Cardiac septum (tissue), 1 donor: ENCODE measurements at regions of chr3 and their contacts with region 1.

Region 1: DNA sequence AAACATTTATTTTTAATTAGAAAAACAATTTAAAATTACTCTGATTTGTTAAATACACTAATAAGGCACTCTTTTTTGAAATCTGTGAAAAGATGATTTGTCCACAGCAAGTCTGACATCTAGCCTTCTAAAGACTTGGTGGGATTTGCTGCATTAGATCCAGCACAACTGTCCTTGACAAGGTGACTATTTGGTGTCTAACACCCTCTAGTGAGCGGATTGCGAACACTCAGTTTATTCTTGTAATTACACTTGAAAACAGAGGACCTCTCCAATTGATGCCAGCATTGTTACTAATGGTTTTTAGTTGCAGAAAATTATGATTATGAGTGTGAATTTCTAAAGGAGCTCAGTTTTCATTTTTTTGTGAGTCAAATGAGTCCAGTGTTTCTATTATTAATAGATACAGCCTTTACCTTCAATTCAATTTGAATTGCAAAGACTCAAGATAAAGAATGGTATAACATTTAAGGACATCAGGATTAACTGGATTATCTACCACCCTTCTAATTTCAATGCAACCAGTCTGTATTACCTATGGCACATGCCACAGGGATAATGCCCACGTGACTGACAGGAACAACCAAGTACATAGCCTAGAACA is 29.7 kb upstream of the STRIT1 start:
- DNase-seq: no peak

Region 2: DNA sequence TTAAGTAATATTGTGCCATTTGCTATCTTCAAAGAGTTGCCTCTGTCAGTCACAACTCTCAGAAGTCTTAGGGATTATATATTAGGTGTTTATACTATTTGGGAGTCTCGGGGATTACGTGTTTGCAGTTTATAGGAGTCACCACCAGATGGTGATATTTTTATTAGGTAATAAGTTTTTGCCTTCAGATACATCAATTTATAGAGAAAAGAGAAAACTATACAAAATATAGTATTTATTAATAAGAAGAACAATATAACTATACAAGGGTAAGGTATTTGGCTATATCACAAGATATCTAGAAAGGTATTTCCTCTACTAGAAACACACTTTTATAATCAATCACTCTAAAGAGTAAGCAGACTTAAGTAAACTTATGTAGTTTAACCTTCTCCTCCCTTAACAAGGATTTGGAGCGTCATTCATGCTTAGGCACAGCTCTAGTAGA is 988.2 kb before region 1 on chr3:
- intact Hi-C with region 1: loop called (anchors 5 kb)
- DNase-seq: no peak

Region 3: GRCh38 chr3:154758109-154758868 is 564.9 kb before region 1 on chr3:
- intact Hi-C with region 1: loop called (anchors 5 kb)
- DNase-seq: no peak

Region 4: DNA sequence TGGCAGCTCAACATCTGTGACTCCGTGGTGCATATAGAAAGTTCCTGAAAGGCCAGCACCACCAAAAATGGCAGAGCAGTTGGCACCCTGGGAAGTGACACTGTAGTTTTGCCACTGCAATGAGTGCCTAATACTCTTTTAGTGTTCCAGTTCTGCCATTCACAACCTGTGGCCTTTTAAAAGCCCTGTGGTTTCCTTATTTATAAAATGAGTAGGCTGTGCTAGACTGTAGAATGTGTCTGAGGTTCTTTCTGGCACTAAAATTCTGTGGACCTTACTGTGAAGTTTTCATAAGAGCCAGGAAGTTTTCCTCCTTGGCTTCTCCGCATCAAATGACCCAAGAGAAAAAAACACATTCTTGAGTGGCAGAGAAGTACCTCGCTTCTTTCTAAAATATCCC is 168.9 kb before region 1 on chr3:
- intact Hi-C with region 1: no loop called
- DNase-seq: no peak